Calu3 (cell line): ENCODE measurements at regions of chr3 and their contacts with region 1.

Region 1: GRCh38 chr3:177359593-177360357 is 162.5 kb upstream of the TBL1XR1 start:
- DNase-seq: peak; percentile 99
- H3K4me3 Mint-ChIP-seq: peak overlapping the region; percentile 63
- H3K27ac Mint-ChIP-seq: peak overlapping the region; percentile 71
- H3K4me1 Mint-ChIP-seq: peaks cover 60% of the 10 kb centered on the region
- H3K27me3 Mint-ChIP-seq: no peaks in the 10 kb centered on the region
- CTCF ChIP-seq: no peak

Region 2: DNA sequence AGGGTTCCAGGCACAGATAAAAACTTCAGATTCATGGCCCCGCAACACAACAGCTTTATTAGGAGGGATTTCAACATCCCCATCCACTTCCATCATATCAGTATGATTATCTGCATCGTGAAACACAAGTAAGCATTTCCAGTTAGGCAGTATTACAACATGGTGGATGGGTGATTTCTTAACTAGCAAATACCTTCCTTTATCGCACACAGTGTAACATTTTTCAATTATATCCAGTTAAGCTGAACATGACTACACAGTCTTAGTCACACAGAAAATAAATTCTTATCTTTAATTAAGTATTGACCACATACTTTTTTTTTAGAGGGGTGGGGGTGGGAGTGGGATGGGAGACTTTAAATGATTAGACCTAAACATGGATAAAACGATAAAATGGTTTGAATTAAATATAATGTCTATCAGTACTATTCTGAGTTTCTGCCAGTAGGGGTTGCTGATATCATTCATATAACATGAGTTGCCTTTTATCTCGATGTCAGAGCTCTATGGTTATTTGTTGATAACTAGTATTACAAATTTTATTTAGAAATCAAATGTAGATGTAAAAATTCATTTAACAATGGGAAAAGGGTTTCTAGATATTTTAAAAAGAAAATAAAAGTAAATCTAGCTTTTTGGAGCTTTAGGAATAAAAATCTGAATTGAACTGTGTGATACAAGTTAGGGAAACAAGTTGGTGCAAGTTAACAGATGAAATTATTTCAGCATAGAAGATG is 309.1 kb before region 1 on chr3:
- CTCF ChIA-PET with region 1: interaction called, 14 read pairs
- intact Hi-C with region 1: loop called (anchors 2 kb)
- DNase-seq: peak; percentile 21
- H3K4me3 Mint-ChIP-seq: no peak overlapping the region
- H3K27ac Mint-ChIP-seq: no peak overlapping the region
- H3K4me1 Mint-ChIP-seq: no peaks in the 10 kb centered on the region
- H3K27me3 Mint-ChIP-seq: no peaks in the 10 kb centered on the region
- CTCF ChIP-seq: peak; percentile 77

Region 3: GRCh38 chr3:177294221-177294620 is 65.6 kb before region 1 on chr3:
- CTCF ChIA-PET with region 1: no interaction called
- intact Hi-C with region 1: loop called (anchors 2 kb)
- DNase-seq: peak; percentile 49
- H3K4me3 Mint-ChIP-seq: no peak overlapping the region
- H3K27ac Mint-ChIP-seq: peak overlapping the region; percentile 72
- H3K4me1 Mint-ChIP-seq: peaks cover 43% of the 10 kb centered on the region
- H3K27me3 Mint-ChIP-seq: no peaks in the 10 kb centered on the region
- CTCF ChIP-seq: no peak

Region 4: DNA sequence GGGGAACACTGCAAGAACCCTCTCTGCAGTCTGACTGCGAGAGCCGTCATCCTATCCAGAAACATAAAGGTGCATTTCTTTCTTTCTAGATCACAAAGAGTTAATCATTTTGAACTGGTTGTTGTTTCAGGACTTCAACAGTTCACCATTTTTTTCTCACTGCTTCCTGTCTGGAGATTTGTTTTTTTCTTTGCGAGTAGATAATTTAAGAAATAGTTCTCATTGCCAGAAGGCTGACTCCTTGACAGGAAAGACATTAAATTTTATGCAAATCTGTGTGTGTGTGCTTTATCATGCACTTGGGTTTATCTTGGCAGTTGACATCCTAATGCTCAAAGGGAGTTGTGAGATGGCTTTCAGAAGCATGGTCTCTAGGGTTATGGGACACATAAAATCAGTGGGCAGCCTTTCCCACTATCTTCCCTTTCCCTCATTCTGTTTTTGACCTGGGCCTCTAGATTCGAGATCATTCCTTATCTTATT is 39.0 kb before region 1 on chr3:
- CTCF ChIA-PET with region 1: no interaction called
- intact Hi-C with region 1: no loop called
- DNase-seq: no peak
- H3K4me3 Mint-ChIP-seq: no peak overlapping the region
- H3K27ac Mint-ChIP-seq: peak overlapping the region; percentile 21
- H3K4me1 Mint-ChIP-seq: peaks cover 11% of the 10 kb centered on the region
- H3K27me3 Mint-ChIP-seq: no peaks in the 10 kb centered on the region
- CTCF ChIP-seq: no peak

Region 5: GRCh38 chr3:177345049-177345972 is 14.5 kb before region 1 on chr3:
- CTCF ChIA-PET with region 1: interaction called, 10 read pairs
- intact Hi-C with region 1: loop called (anchors 1 kb)
- DNase-seq: peak; percentile 93
- H3K4me3 Mint-ChIP-seq: peak overlapping the region; percentile 63
- H3K27ac Mint-ChIP-seq: peak overlapping the region; percentile 100
- H3K4me1 Mint-ChIP-seq: peaks cover 74% of the 10 kb centered on the region
- H3K27me3 Mint-ChIP-seq: no peaks in the 10 kb centered on the region
- CTCF ChIP-seq: no peak

Region 6: GRCh38 chr3:177603148-177603603 is 243.4 kb after region 1 on chr3:
- CTCF ChIA-PET with region 1: interaction called, 4 read pairs
- intact Hi-C with region 1: loop called (anchors 5 kb)
- DNase-seq: no peak
- H3K4me3 Mint-ChIP-seq: no peak overlapping the region
- H3K27ac Mint-ChIP-seq: peak overlapping the region; percentile 59
- H3K4me1 Mint-ChIP-seq: peaks cover 48% of the 10 kb centered on the region
- H3K27me3 Mint-ChIP-seq: no peaks in the 10 kb centered on the region
- CTCF ChIP-seq: no peak

Region 7: DNA sequence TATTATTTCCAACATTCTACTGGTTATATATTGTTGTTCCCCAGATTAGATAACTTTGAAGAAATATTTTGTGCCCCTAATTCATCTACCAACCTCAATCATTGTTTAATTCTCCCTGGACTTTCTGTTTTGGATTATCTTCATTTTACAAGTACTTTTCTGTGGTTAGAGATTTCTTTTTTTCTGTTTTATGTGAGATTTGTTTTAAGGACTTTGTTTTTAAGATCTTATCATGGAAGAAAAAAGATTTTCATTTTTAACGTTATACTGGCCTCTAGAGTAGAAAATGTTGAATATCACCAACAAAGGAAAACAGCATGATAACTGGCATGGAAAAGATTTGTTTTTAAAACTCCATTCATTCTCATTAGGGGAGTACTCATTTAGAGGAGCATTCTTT is 965.6 kb after region 1 on chr3:
- CTCF ChIA-PET with region 1: interaction called, 4 read pairs
- intact Hi-C with region 1: loop called (anchors 10 kb)
- DNase-seq: no peak
- H3K4me3 Mint-ChIP-seq: no peak overlapping the region
- H3K27ac Mint-ChIP-seq: no peak overlapping the region
- H3K4me1 Mint-ChIP-seq: no peaks in the 10 kb centered on the region
- H3K27me3 Mint-ChIP-seq: no peaks in the 10 kb centered on the region
- CTCF ChIP-seq: no peak